ENCODE measurements at regions of chr1 and their contacts with region 1.

Region 1: GRCh38 chr1:151547119-151547899 is 7.2 kb downstream of the TUFT1 start:
- DNase-seq: peak; percentile 98
- H3K4me3 Mint-ChIP-seq: peak overlapping the region; percentile 51
- H3K27ac Mint-ChIP-seq: peak overlapping the region; percentile 67
- H3K4me1 Mint-ChIP-seq: peaks cover 71% of the 10 kb centered on the region
- H3K27me3 Mint-ChIP-seq: no peaks in the 10 kb centered on the region
- CTCF ChIP-seq: no peak

Region 2: GRCh38 chr1:151568626-151569088 is 21.3 kb after region 1 on chr1:
- CTCF ChIA-PET with region 1: interaction called, 3 read pairs
- POLR2A ChIA-PET with region 1: interaction called, 61 read pairs
- intact Hi-C with region 1: no loop called
- DNase-seq: peak; percentile 38
- H3K4me3 Mint-ChIP-seq: no peak overlapping the region
- H3K27ac Mint-ChIP-seq: peak overlapping the region; percentile 24
- H3K4me1 Mint-ChIP-seq: peaks cover 23% of the 10 kb centered on the region
- H3K27me3 Mint-ChIP-seq: no peaks in the 10 kb centered on the region
- CTCF ChIP-seq: no peak

Region 3: GRCh38 chr1:151611832-151612500 is 64.7 kb after region 1 on chr1 and contains the start of gene SNX27:
- CTCF ChIA-PET with region 1: interaction called, 3 read pairs
- POLR2A ChIA-PET with region 1: interaction called, 15 read pairs
- intact Hi-C with region 1: no loop called
- DNase-seq: peak; percentile 96
- H3K4me3 Mint-ChIP-seq: peak within 1 kb of the TSS; percentile 89
- H3K27ac Mint-ChIP-seq: peak within 1 kb of the TSS; percentile 88
- H3K4me1 Mint-ChIP-seq: peaks cover 60% of the 10 kb centered on the region
- H3K27me3 Mint-ChIP-seq: no peaks in the 10 kb centered on the region
- CTCF ChIP-seq: no peak
- total RNA-seq, gene SNX27: 36.9 and 43.1 TPM in 2 replicates

Region 4: DNA sequence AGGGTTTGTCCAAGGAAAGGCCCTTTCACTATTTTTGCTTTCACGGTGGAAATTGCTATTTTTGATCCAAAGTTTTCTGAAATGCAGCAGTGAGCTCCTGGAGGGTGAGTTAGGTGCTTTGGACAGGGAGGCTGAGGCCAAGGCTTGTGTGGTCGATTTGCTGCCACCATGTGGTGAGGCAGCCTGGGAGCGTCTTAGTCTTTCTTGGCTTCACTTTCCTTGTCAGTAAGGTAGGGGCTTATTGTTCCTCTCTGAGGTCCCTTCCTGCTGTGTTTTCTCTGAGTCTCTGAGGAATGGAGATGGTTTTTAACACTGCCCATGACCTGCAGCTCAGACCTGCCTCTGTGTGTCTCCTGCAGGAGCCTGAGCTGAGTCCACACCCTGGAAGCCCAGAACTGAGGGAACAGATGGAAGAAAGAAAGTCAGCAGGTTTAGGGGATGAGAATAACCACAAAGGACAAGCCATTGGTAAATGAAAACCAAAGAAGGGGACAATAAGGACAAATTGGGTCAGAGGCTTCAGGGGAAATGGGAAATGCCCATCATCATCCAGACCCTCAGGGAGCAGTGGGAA is 466.4 kb after region 1 on chr1:
- CTCF ChIA-PET with region 1: no interaction called
- POLR2A ChIA-PET with region 1: no interaction called
- intact Hi-C with region 1: no loop called
- DNase-seq: peak; percentile 76
- H3K4me3 Mint-ChIP-seq: no peak overlapping the region
- H3K27ac Mint-ChIP-seq: no peak overlapping the region
- H3K4me1 Mint-ChIP-seq: peaks cover 12% of the 10 kb centered on the region
- H3K27me3 Mint-ChIP-seq: no peaks in the 10 kb centered on the region
- CTCF ChIP-seq: peak; percentile 75

Measured in MCF 10A (cell line).